ENCODE measurements at regions of chr19 and their contacts with region 1.

Region 1: GRCh38 chr19:54573330-54573872 is at the start of gene LILRA2:
- DNase-seq: peak; percentile 74 to 79 (median 78)
- H3K4me3 ChIP-seq: peak within 1 kb of the TSS; percentile 78 to 92 (median 80)
- H3K4me3 Mint-ChIP-seq: peak within 1 kb of the TSS; percentile 92 to 96
- H3K27ac ChIP-seq: peak within 1 kb of the TSS; percentile 96 to 98
- H3K27ac Mint-ChIP-seq: peak within 1 kb of the TSS; percentile 96 to 99 (median 97)
- H3K4me1 ChIP-seq: peaks cover 60 to 74% of the 10 kb centered on the region in 2 donors
- H3K4me1 Mint-ChIP-seq: peaks cover 75% of the 10 kb centered on the region
- H3K27me3 ChIP-seq: no peaks in the 10 kb centered on the region
- H3K27me3 Mint-ChIP-seq: peaks cover 0 to 2% (median 2%) of the 10 kb centered on the region in 3 donors
- CTCF ChIP-seq: no peak
- polyA plus RNA-seq, gene LILRA2: 333 to 451 (median 377) TPM

Region 2: GRCh38 chr19:54297760-54298305 is 275.6 kb before region 1 on chr19:
- intact Hi-C with region 1: loop called in 1 of 2 experiments (anchors 5 kb)
- DNase-seq: peak in 2 of 3 donors; percentile 34
- H3K4me3 ChIP-seq: no peak overlapping the region
- H3K4me3 Mint-ChIP-seq: no peak overlapping the region
- H3K27ac ChIP-seq: no peak overlapping the region
- H3K27ac Mint-ChIP-seq: peak overlapping the region in 3 of 7 donors; percentile 50 to 69 (median 66)
- H3K4me1 ChIP-seq: peaks cover 41 to 46% of the 10 kb centered on the region in 2 donors
- H3K4me1 Mint-ChIP-seq: peaks cover 48% of the 10 kb centered on the region
- H3K27me3 ChIP-seq: peaks cover 2 to 7% of the 10 kb centered on the region in 2 donors
- H3K27me3 Mint-ChIP-seq: peaks cover 9 to 18% (median 11%) of the 10 kb centered on the region in 3 donors
- CTCF ChIP-seq: peak; percentile 31

Region 3: GRCh38 chr19:54606891-54607796 is 33.7 kb after region 1 on chr19:
- intact Hi-C with region 1: loop called in 1 of 2 experiments (anchors 5 kb)
- DNase-seq: peak; percentile 81 to 89 (median 84)
- H3K4me3 ChIP-seq: peak overlapping the region in 1 of 3 experiments; percentile 56
- H3K4me3 Mint-ChIP-seq: peak overlapping the region; percentile 57 to 92
- H3K27ac ChIP-seq: peak overlapping the region; percentile 86 to 96
- H3K27ac Mint-ChIP-seq: peak overlapping the region; percentile 93 to 97 (median 96)
- H3K4me1 ChIP-seq: peaks cover 58 to 73% of the 10 kb centered on the region in 2 donors
- H3K4me1 Mint-ChIP-seq: peaks cover 61% of the 10 kb centered on the region
- H3K27me3 ChIP-seq: no peaks in the 10 kb centered on the region
- H3K27me3 Mint-ChIP-seq: peaks cover 0 to 1% (median 1%) of the 10 kb centered on the region in 3 donors
- CTCF ChIP-seq: no peak

Region 4: DNA sequence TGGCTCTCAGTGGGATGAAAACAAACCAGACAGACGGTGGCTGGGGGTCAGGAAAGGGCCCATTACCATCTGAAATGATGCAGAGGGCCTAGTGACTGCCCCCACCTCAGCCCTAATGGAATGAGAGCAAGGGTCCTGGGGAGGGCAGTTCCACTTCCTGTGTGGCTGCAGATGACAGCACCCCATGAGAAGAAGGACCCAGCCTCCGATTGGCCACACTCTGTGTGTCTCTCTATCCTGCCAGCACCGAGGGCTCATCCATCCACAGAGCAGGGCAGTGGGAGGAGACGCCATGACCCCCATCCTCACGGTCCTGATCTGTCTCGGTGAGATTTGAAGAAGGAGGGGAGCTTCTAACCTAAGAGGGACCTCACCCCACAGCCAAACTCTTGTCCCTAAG is 57.4 kb after region 1 on chr19:
- intact Hi-C with region 1: loop called in 1 of 2 experiments (anchors 5 kb)
- DNase-seq: peak in 2 of 3 donors; percentile 27 to 47
- H3K4me3 ChIP-seq: peak overlapping the region; percentile 84 to 97 (median 94)
- H3K4me3 Mint-ChIP-seq: peak overlapping the region; percentile 99 to 100
- H3K27ac ChIP-seq: peak overlapping the region; percentile 70 to 84
- H3K27ac Mint-ChIP-seq: peak overlapping the region; percentile 88 to 96 (median 91)
- H3K4me1 ChIP-seq: peaks cover 39 to 48% of the 10 kb centered on the region in 2 donors
- H3K4me1 Mint-ChIP-seq: peaks cover 58% of the 10 kb centered on the region
- H3K27me3 ChIP-seq: no peaks in the 10 kb centered on the region
- H3K27me3 Mint-ChIP-seq: peaks cover 2 to 9% (median 3%) of the 10 kb centered on the region in 3 donors
- CTCF ChIP-seq: no peak